ENCODE measurements at regions of chr9 and their contacts with region 1.

Region 1: DNA sequence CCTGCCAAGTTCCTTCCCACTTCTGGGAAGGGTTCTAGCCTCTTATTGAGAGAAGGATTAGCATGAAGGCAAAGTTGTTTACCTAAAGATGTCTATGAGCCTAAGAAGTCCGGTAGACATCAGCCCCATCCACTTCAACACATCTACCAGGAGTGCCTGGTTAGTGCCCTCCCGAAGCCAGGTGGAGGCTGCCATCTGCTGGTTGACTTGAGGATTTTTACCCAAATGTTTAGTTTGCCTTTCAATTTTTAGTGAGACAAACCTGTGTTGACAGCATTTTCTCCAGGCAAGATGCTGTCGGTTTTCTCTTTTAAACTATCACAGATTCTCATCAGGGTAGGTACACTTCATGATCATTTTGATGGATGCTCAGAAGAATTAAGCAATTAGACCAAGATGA is 83.6 kb upstream of the TNFSF8 start:
- DNase-seq: peak; percentile 73
- H3K4me3 Mint-ChIP-seq: no peak overlapping the region
- H3K27ac Mint-ChIP-seq: peak overlapping the region; percentile 52
- H3K4me1 Mint-ChIP-seq: peaks cover 72% of the 10 kb centered on the region
- H3K27me3 Mint-ChIP-seq: peaks cover 3% of the 10 kb centered on the region

Region 2: GRCh38 chr9:114405294-114406034 is 608.5 kb before region 1 on chr9:
- intact Hi-C with region 1: loop called (anchors 1 kb)
- DNase-seq: peak; percentile 71
- H3K4me3 Mint-ChIP-seq: no peak overlapping the region
- H3K27ac Mint-ChIP-seq: no peak overlapping the region
- H3K4me1 Mint-ChIP-seq: peaks cover 6% of the 10 kb centered on the region
- H3K27me3 Mint-ChIP-seq: peaks cover 3% of the 10 kb centered on the region

Region 3: GRCh38 chr9:114662081-114662989 is 351.7 kb before region 1 on chr9:
- intact Hi-C with region 1: loop called (anchors 1 kb)
- DNase-seq: peak; percentile 54
- H3K4me3 Mint-ChIP-seq: no peak overlapping the region
- H3K27ac Mint-ChIP-seq: no peak overlapping the region
- H3K4me1 Mint-ChIP-seq: peaks cover 16% of the 10 kb centered on the region
- H3K27me3 Mint-ChIP-seq: peaks cover 13% of the 10 kb centered on the region

Region 4: DNA sequence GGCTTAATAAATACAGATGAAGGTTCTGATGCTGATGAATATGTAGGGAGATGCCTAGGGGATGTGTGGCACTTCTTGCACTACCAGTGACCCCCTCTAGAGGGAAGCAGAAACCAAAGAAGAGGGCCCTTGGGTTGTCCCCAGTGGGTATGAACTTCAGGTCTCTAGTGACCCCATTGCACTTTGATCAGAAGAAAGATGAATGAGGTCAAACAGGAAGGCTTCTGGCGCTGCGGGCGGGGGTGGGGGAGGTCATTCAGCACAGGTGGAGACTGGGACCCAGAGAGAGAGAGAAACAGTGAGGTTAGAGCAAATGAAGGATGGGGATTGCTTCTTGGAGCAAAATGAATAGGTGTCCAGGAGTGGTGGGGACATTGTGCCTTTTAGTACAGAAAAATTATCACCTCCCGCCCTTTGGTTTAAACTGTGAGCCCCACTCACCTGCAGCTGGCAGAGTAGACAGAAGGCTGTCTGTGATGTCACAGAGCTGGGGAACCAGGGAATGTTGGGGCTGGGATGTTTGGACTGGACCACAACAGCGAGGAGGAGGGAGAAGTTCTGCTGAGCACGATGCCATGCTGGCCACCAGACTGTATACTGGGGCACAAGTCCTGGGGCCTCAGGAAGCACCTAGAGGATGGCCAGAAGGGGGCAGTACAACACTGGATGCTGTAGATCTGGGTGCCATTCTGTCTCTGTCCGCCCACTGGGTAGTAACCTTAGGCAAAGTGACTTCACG is 332.2 kb before region 1 on chr9 and contains the start of gene TEX48:
- intact Hi-C with region 1: loop called (anchors 1 kb)
- DNase-seq: peak; percentile 76
- H3K4me3 Mint-ChIP-seq: peak within 1 kb of the TSS; percentile 49
- H3K27ac Mint-ChIP-seq: peak within 1 kb of the TSS; percentile 97
- H3K4me1 Mint-ChIP-seq: peaks cover 81% of the 10 kb centered on the region
- H3K27me3 Mint-ChIP-seq: no peaks in the 10 kb centered on the region
- total RNA-seq, gene TEX48: 1.0 and 1.2 TPM in 2 replicates

Region 5: GRCh38 chr9:115524453-115525059 is 510.6 kb after region 1 on chr9:
- intact Hi-C with region 1: loop called (anchors 1 kb)
- DNase-seq: no peak
- H3K4me3 Mint-ChIP-seq: no peak overlapping the region
- H3K27ac Mint-ChIP-seq: no peak overlapping the region
- H3K4me1 Mint-ChIP-seq: no peaks in the 10 kb centered on the region
- H3K27me3 Mint-ChIP-seq: peaks cover 3% of the 10 kb centered on the region

Region 6: DNA sequence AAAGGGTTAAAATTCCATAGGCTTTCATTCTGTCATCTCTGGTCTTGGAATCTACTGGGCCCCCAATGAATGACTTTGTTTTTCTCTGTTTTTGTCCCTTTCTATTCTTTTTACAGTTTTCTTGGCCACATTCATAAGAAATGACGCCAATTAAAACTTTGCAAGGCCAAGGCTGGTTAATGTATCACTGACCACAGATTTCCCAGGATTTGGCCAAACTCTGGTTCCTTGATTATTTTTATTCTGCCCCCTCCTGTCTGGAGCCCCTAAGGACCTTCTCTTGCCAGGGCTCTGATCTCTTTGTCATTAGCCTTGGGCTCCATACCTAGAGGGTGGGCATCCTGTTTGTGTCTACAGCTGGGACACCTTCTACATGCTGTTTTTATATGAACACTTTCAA is 750.6 kb after region 1 on chr9:
- intact Hi-C with region 1: no loop called
- DNase-seq: no peak
- H3K4me3 Mint-ChIP-seq: no peak overlapping the region
- H3K27ac Mint-ChIP-seq: no peak overlapping the region
- H3K4me1 Mint-ChIP-seq: no peaks in the 10 kb centered on the region
- H3K27me3 Mint-ChIP-seq: no peaks in the 10 kb centered on the region